Activated CD4-positive, alpha-beta T cell treated with anti-CD3 and anti-CD28 coated beads for 36 hours (primary cell): ENCODE measurements at regions of chr6 and their contacts with region 1.

Region 1: GRCh38 chr6:127120787-127121636 is 2.5 kb downstream of the RSPO3 start:
- DNase-seq: peak; percentile 89
- ATAC-seq: peak; percentile 90
- H3K4me3 Mint-ChIP-seq: no peak overlapping the region
- H3K27ac Mint-ChIP-seq: no peak overlapping the region
- H3K4me1 Mint-ChIP-seq: peaks cover 19% of the 10 kb centered on the region
- H3K27me3 Mint-ChIP-seq: peaks cover 48% of the 10 kb centered on the region

Region 2: GRCh38 chr6:125314019-125314581 is 1806.9 kb before region 1 on chr6:
- CTCF ChIA-PET with region 1: no interaction called
- POLR2A ChIA-PET with region 1: no interaction called
- intact Hi-C with region 1: loop called in 1 of 2 experiments (anchors 2 kb)
- DNase-seq: peak; percentile 62
- ATAC-seq: peak; percentile 74
- H3K4me3 Mint-ChIP-seq: no peak overlapping the region
- H3K27ac Mint-ChIP-seq: no peak overlapping the region
- H3K4me1 Mint-ChIP-seq: no peaks in the 10 kb centered on the region
- H3K27me3 Mint-ChIP-seq: peaks cover 2% of the 10 kb centered on the region

Region 3: GRCh38 chr6:126170978-126171382 is 950.0 kb before region 1 on chr6:
- CTCF ChIA-PET with region 1: no interaction called
- POLR2A ChIA-PET with region 1: no interaction called
- intact Hi-C with region 1: loop called in 1 of 2 experiments (anchors 10 kb)
- DNase-seq: peak; percentile 44
- ATAC-seq: peak; percentile 65
- H3K4me3 Mint-ChIP-seq: no peak overlapping the region
- H3K27ac Mint-ChIP-seq: no peak overlapping the region
- H3K4me1 Mint-ChIP-seq: peaks cover 4% of the 10 kb centered on the region
- H3K27me3 Mint-ChIP-seq: no peaks in the 10 kb centered on the region

Region 4: GRCh38 chr6:126361832-126362412 is 759.1 kb before region 1 on chr6:
- CTCF ChIA-PET with region 1: no interaction called
- POLR2A ChIA-PET with region 1: no interaction called
- intact Hi-C with region 1: loop called in 1 of 2 experiments (anchors 1 kb)
- DNase-seq: no peak
- ATAC-seq: no peak
- H3K4me3 Mint-ChIP-seq: no peak overlapping the region
- H3K27ac Mint-ChIP-seq: no peak overlapping the region
- H3K4me1 Mint-ChIP-seq: no peaks in the 10 kb centered on the region
- H3K27me3 Mint-ChIP-seq: no peaks in the 10 kb centered on the region

Region 5: GRCh38 chr6:126804332-126805064 is 316.5 kb before region 1 on chr6:
- CTCF ChIA-PET with region 1: no interaction called
- POLR2A ChIA-PET with region 1: no interaction called
- intact Hi-C with region 1: loop called (anchors 1 to 2 kb)
- DNase-seq: peak; percentile 13
- ATAC-seq: no peak
- H3K4me3 Mint-ChIP-seq: no peak overlapping the region
- H3K27ac Mint-ChIP-seq: no peak overlapping the region
- H3K4me1 Mint-ChIP-seq: no peaks in the 10 kb centered on the region
- H3K27me3 Mint-ChIP-seq: peaks cover 3% of the 10 kb centered on the region